Activated T-helper 1 cell treated with anti-CD3 and anti-CD28 coated beads, Interleukin-12 subunit alpha, Interleukin-12 subunit beta, Interleukin-2, Interleukin-4 antibody, amounts not matched to agents 30 ng/mL and 10 ng/mL and 1 ng/mL, durations not matched to agents 14 hours and 24 hours and 36 hours (primary cell): ENCODE measurements at regions of chr7 and their contacts with region 1.

Region 1: DNA sequence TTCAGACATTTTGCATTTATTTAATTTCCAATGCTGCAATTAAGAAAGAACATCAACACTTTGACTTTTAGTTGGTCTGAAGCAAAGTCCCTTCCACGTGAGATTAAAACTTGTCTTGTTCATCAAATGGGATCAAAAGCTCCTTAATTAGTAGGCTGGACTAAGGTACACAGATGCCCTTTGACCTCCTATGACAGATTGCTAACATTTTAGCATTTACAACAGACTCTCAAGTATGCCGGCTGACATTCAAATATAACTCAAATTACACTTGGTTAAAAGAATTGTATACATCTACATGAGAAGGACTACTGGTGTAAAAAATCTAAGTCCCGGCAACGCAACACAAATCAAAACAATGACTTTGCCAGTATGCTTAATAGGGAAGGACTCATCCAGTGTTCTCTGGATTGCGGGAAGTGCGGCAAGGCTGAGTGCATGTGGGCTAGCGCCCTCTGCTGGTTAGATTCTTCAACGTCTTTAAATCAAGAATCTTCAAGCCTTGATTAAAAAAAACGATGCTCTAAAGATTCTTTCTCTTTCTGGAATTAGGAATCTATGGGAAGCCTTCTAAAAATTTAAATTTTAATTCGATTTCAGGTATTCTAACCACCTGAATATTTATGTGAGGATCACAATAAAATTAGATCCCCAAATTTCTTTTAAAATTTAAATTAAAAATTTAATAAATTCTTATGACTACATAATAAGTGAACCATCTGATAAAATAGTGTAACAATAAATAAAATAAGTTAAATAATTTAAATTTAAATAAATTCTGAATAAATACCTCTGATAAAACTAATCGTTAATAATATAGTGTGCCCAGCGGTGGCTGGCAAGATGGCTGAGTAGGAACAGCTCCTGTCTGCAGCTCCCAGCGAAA is 444.7 kb downstream of the DGKB start:
- DNase-seq: peak; percentile 3
- H3K4me3 Mint-ChIP-seq: no peak overlapping the region
- H3K27ac Mint-ChIP-seq: no peak overlapping the region
- H3K4me1 Mint-ChIP-seq: no peaks in the 10 kb centered on the region
- H3K27me3 Mint-ChIP-seq: no peaks in the 10 kb centered on the region

Region 2: DNA sequence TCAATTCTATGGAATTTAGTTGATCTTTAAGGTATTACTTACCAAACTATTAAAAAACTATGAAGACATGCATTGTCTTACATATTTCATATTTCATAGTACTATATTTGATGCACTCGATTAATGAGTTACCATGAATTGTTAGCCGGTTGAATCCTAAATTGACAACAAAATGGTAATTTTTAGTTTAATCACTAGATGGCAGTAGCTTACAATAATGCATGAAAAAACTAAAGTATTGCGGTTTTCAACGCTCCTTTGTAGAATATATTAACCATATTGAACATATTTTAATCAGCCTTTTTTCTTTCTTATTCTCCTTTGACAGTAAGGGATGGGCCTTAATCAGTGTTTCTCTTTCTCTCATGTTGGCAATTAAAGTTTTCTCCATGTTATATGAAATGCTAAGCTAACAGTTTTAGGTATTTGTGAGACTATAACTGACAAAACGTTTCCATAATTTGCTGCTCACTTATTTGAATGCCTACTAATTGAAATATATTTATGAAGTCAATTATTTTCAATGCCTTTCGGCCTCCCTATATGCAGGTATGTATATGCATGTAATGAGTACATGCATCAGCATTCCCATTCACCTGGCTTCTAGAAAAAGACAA is 1818.9 kb before region 1 on chr7:
- intact Hi-C with region 1: loop called (anchors 2 kb)
- DNase-seq: no peak
- H3K4me3 Mint-ChIP-seq: no peak overlapping the region
- H3K27ac Mint-ChIP-seq: no peak overlapping the region
- H3K4me1 Mint-ChIP-seq: peaks cover 16% of the 10 kb centered on the region
- H3K27me3 Mint-ChIP-seq: peaks cover 4% of the 10 kb centered on the region

Region 3: DNA sequence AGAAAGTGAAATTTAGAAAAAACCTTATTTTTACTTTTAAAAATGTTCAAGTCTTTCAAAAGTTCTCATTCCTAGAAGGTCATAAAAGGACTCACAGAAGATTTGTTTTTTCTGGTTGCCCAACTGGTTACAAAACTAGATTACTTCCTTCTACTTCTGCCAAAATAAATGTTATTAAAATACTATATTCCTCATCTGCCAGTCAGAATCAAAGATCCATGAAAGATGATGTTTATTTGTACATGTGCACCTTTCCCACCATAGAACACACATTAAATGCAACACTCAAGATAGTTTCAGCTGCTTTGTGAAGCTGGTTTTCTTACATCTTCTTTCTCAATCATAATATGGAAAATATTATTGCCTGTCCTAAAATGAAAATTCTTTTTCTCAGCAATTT is 933.7 kb before region 1 on chr7:
- intact Hi-C with region 1: loop called (anchors 2 kb)
- DNase-seq: no peak
- H3K4me3 Mint-ChIP-seq: no peak overlapping the region
- H3K27ac Mint-ChIP-seq: no peak overlapping the region
- H3K4me1 Mint-ChIP-seq: no peaks in the 10 kb centered on the region
- H3K27me3 Mint-ChIP-seq: no peaks in the 10 kb centered on the region

Region 4: DNA sequence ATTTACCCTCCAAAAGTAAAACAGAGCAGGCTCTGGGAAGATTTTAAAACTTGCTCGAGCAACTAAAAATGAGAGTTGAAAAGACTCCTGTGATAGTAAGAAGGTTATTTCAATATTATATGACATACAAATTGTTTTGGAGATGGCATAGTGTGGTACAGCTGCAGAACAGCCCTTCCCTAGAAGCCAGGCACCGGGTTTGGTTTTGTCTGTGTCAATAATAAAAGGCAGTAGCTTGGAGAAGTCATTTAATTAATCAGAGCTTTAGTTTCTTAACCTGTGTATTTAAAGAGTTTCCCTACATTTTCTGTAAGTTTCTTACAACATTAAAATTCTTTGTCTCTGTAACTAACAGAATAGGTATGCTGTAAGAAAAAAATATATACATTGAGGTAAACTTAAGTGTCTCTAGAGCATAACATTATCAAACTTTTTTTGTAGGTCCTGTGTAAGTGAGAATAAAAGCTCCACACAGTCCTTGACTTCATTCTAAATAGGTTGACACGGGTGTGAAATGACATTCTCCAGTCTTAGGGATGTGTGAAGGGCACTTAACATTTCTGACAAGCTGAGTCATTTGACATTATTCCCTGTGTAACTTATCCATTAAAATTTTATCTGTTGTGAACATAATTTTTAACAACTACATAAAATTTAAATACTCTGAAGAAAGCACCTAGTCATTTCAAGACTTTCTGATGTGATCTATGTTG is 43.4 kb before region 1 on chr7:
- intact Hi-C with region 1: no loop called
- DNase-seq: no peak
- H3K4me3 Mint-ChIP-seq: no peak overlapping the region
- H3K27ac Mint-ChIP-seq: no peak overlapping the region
- H3K4me1 Mint-ChIP-seq: no peaks in the 10 kb centered on the region
- H3K27me3 Mint-ChIP-seq: no peaks in the 10 kb centered on the region